Naive thymus-derived CD4-positive, alpha-beta T cell (primary cell): ENCODE measurements at regions of chr17 and their contacts with region 1.

Region 1: DNA sequence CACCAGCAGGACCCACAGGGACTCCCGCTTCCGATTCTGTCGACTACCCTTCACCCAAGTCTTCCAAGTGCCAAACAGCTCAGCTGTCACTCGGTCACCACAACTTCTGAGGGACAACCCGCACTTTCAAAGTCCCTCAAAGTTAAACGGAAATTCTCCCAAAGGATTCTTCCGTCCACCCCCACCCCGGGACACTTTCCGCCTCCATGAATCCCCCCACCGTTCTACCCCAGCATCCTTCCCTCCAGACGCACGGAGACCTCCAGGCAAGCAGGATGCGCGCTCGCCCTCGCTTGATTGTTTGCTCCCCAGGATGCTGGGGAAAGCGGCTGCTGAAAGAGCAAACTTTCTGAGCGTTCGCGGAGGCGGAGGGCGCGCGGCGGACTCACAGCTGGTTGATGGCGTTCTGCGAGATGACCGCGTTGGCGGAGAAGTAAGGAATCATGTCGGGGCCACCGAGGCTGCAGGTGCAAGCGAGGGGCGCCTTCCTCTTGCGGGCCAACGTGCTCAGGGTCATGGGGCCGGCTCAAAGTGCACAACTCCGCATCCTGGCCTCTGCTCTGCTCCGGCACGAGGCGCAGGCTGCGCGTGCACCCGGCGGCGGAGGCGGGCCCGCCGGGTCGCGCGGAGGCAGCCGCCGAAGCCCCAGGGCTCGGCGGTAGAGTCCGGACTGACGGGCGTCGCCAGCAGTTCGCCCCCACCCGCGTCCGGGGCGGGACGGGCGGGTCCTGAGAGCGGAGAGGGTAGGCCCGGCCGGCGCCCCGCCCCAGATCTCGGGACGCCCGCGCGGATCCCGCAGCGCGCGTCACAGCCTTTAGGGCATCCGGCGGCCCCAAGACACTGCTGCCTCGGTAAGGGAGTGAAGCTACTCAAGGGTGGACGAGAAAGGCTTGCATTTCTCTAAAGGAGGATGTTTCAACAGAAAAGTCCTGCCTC is 138.3 kb upstream of the CORO6 start:
- DNase-seq: peak; percentile 86 to 95 (median 93)
- ATAC-seq: peak; percentile 94
- H3K4me3 ChIP-seq: peak overlapping the region; percentile 89
- H3K4me3 Mint-ChIP-seq: peak overlapping the region; percentile 90 to 100 (median 98)
- H3K27ac ChIP-seq: peak overlapping the region; percentile 82
- H3K27ac Mint-ChIP-seq: peak overlapping the region; percentile 90 to 98 (median 96)
- H3K4me1 ChIP-seq: peaks cover 25 to 29% of the 10 kb centered on the region in 2 donors
- H3K4me1 Mint-ChIP-seq: peaks cover 16 to 53% (median 37%) of the 10 kb centered on the region in 7 donors
- H3K27me3 ChIP-seq: no peaks in the 10 kb centered on the region
- H3K27me3 Mint-ChIP-seq: no peaks in the 10 kb centered on the region

Region 2: DNA sequence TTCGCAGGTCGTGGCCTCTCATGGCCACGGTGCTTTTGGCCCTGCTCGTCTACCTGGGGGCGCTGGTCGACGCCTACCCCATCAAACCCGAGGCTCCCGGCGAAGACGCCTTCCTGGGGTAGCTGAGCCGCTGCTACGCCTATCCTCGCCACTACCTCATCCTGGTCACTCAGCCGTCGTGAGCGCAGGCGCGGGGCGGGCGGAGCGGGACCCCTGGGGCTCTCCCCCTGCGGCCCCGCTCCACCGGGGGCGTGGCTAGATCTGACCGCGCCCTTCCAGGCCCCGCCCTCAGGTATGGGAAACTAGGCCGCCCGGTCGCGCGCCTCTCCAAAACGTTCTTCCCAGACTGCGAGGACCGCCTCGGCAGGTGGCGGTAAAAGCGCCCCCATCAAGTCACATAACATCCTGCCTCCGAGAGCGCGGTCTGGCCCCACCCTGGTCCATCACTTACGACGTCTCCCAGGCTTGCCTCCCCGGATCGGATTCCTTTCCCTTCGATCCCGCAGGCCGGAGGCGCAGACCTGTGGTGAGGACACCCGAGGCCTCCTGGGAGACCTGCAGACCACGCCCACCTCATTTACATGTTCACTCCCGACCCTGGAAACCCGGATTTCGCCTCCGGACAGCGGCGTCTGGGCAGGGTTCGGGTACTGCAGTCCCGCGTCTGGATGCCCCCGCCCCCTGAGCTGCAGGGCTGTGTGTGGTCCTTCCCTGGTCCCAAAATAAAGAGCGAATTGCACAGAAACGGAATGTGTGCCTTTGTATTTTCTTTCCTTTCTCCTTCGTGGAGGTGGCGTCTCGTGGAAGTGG is 1533.5 kb before region 1 on chr17:
- CTCF ChIA-PET with region 1: no interaction called
- POLR2A ChIA-PET with region 1: no interaction called
- intact Hi-C with region 1: no loop called
- DNase-seq: peak in 1 of 9 donors; percentile 41
- ATAC-seq: peak; percentile 48
- H3K4me3 ChIP-seq: no peak overlapping the region
- H3K4me3 Mint-ChIP-seq: peak overlapping the region; percentile 51 to 82 (median 74)
- H3K27ac ChIP-seq: no peak overlapping the region
- H3K27ac Mint-ChIP-seq: no peak overlapping the region
- H3K4me1 ChIP-seq: no peaks in the 10 kb centered on the region
- H3K4me1 Mint-ChIP-seq: peaks cover 8 to 15% (median 12%) of the 10 kb centered on the region in 7 donors
- H3K27me3 ChIP-seq: peaks cover 0 to 3% of the 10 kb centered on the region in 2 donors
- H3K27me3 Mint-ChIP-seq: peaks cover 43 to 58% (median 48%) of the 10 kb centered on the region in 5 donors

Region 3: DNA sequence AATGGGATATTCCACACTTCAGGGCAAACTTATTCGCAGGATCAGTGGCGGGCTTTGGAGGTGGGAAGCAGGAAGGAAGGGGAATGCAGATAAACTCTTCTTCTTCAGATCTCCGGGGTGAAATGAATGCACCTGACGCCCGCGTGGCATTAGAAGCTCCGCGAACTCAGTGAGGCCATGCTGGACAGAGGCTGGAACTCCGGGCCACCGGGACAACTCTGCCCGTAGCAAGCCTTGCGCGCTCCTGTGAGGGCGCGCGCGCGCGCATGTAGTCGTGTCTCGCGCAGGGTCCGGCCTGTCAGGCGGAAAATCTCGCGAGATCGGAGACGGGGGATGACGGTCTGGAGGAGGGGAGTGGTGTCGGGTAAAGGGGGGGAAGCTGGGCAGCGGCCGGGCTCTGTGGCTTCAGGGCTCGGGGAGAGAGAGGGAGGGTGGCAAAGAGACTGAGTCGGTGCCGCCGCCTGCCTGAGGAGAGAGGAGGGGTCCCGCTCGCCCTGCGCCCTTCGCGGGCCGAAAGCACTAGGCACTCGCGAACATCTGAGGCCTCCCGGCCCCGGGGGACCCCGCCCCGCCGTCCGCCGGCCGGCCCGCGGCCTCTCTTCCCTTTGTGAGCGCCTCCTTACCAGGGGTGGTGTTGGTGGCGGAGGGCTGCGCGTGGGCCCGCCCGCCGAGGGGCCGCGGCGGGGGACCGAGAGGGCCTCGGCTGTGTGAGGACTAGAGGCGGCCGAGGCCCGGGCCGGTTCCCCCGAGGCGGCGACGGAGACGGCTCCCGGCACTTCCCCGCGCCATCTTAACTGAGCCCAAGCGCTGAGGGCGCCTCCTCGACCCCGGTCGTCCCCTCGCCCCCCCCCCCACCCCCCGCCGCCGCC is 370.8 kb before region 1 on chr17 and contains the start of gene TAOK1:
- CTCF ChIA-PET with region 1: no interaction called
- POLR2A ChIA-PET with region 1: no interaction called
- intact Hi-C with region 1: loop called in 1 of 2 experiments (anchors 5 kb)
- DNase-seq: peak; percentile 93 to 98 (median 96)
- ATAC-seq: peak; percentile 97
- H3K4me3 ChIP-seq: peak within 1 kb of the TSS; percentile 94
- H3K4me3 Mint-ChIP-seq: peak within 1 kb of the TSS; percentile 95 to 99 (median 98)
- H3K27ac ChIP-seq: peak within 1 kb of the TSS; percentile 98
- H3K27ac Mint-ChIP-seq: peak within 1 kb of the TSS; percentile 92 to 98 (median 97)
- H3K4me1 ChIP-seq: peaks cover 14 to 25% of the 10 kb centered on the region in 2 donors
- H3K4me1 Mint-ChIP-seq: peaks cover 36 to 49% (median 44%) of the 10 kb centered on the region in 7 donors
- H3K27me3 ChIP-seq: no peaks in the 10 kb centered on the region
- H3K27me3 Mint-ChIP-seq: peaks cover 0 to 2% (median 0%) of the 10 kb centered on the region in 5 donors
- total RNA-seq, gene TAOK1: 62.4 to 70.1 (median 66.5) TPM

Region 4: DNA sequence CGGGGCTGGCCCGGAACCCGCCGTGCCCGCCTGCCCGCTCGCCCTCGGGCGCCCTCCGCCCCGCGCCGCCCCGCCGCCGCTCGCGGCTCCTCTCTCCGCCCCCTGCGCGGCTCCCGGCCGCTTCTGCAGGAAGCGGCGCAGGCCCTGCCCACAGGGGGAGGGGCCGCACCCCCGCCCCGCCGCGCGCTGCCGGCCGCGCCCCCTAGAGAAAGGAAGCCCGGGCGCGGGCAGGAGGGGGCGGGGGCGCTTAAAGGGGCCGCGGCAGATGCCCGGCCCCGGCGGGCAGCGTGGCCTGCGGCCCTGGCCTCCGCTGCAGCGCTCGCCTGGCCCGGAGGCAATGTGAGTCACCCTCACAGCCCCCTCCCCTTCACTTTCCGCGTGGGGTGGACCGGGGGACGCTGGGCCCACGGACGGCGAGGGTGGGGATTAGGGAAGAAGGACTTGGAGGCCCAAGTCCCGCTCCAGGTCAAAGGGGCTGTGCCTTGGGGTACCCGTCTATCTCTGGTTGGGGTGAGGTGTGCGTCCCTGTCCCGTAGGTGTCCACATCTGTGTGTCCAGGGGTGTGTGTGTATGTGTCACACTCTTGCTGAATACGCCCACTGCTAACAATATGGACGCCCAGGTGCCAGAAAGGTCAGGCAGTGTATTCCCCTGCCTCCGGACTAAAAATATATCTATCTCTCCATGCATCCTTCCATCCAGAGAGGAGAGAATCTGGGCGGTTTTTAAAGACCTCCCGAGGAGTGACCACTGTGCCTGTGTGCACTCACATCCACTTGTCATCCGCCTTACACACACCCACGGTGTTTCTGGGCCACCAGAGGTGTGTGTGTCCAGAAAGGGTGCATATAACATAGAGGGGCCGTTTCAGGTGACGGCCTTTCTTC is 171.3 kb before region 1 on chr17 and contains the start of gene GIT1:
- CTCF ChIA-PET with region 1: no interaction called
- POLR2A ChIA-PET with region 1: interaction called, 3 read pairs
- intact Hi-C with region 1: loop called in 1 of 2 experiments (anchors 1 kb)
- DNase-seq: peak; percentile 77 to 88 (median 84)
- ATAC-seq: peak; percentile 93
- H3K4me3 ChIP-seq: peak within 1 kb of the TSS; percentile 72
- H3K4me3 Mint-ChIP-seq: peak within 1 kb of the TSS; percentile 88 to 96 (median 94)
- H3K27ac ChIP-seq: peak within 1 kb of the TSS; percentile 75
- H3K27ac Mint-ChIP-seq: peak within 1 kb of the TSS; percentile 78 to 94 (median 89)
- H3K4me1 ChIP-seq: peaks cover 58 to 65% of the 10 kb centered on the region in 2 donors
- H3K4me1 Mint-ChIP-seq: peaks cover 35 to 73% (median 66%) of the 10 kb centered on the region in 7 donors
- H3K27me3 ChIP-seq: no peaks in the 10 kb centered on the region
- H3K27me3 Mint-ChIP-seq: no peaks in the 10 kb centered on the region
- total RNA-seq, gene GIT1: 42.5 to 76.3 (median 62.4) TPM

Region 5: GRCh38 chr17:29640413-29640812 is 120.6 kb before region 1 on chr17:
- CTCF ChIA-PET with region 1: interaction called, 3 read pairs
- POLR2A ChIA-PET with region 1: interaction called, 3 read pairs
- intact Hi-C with region 1: loop called (anchors 1 to 5 kb)
- DNase-seq: no peak
- ATAC-seq: no peak
- H3K4me3 ChIP-seq: no peak overlapping the region
- H3K4me3 Mint-ChIP-seq: no peak overlapping the region
- H3K27ac ChIP-seq: no peak overlapping the region
- H3K27ac Mint-ChIP-seq: peak overlapping the region in 8 of 9 donors; percentile 40 to 88 (median 61)
- H3K4me1 ChIP-seq: no peaks in the 10 kb centered on the region
- H3K4me1 Mint-ChIP-seq: peaks cover 0 to 35% (median 19%) of the 10 kb centered on the region in 7 donors
- H3K27me3 ChIP-seq: no peaks in the 10 kb centered on the region
- H3K27me3 Mint-ChIP-seq: no peaks in the 10 kb centered on the region

Region 6: DNA sequence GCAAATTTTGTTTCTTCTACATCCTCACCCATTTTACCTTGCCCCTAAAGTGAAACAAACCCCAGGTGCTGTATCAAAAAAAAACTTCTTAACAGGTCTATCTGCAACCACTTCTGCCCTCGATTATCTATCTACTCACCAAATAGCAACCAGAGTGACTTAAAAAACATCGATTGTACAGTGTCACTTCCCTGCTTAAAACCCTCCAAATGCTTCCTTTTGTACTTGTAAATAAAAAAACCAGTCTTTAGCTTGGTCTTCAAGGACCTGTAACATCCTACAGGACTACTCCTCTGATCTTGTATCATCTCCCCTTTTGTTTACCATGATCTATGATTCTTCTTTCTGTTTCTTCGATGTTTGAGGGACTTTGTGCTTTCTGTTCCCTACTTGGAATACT is 55.6 kb before region 1 on chr17:
- CTCF ChIA-PET with region 1: no interaction called
- POLR2A ChIA-PET with region 1: interaction called, 57 read pairs
- intact Hi-C with region 1: loop called (anchors 1 kb)
- DNase-seq: peak in 6 of 9 donors; percentile 16 to 41 (median 24)
- ATAC-seq: peak; percentile 6
- H3K4me3 ChIP-seq: peak overlapping the region; percentile 22
- H3K4me3 Mint-ChIP-seq: peak overlapping the region; percentile 4 to 81 (median 72)
- H3K27ac ChIP-seq: peak overlapping the region; percentile 73
- H3K27ac Mint-ChIP-seq: peak overlapping the region; percentile 85 to 99 (median 96)
- H3K4me1 ChIP-seq: peaks cover 35 to 41% of the 10 kb centered on the region in 2 donors
- H3K4me1 Mint-ChIP-seq: peaks cover 18 to 69% (median 51%) of the 10 kb centered on the region in 7 donors
- H3K27me3 ChIP-seq: no peaks in the 10 kb centered on the region
- H3K27me3 Mint-ChIP-seq: no peaks in the 10 kb centered on the region

Region 7: DNA sequence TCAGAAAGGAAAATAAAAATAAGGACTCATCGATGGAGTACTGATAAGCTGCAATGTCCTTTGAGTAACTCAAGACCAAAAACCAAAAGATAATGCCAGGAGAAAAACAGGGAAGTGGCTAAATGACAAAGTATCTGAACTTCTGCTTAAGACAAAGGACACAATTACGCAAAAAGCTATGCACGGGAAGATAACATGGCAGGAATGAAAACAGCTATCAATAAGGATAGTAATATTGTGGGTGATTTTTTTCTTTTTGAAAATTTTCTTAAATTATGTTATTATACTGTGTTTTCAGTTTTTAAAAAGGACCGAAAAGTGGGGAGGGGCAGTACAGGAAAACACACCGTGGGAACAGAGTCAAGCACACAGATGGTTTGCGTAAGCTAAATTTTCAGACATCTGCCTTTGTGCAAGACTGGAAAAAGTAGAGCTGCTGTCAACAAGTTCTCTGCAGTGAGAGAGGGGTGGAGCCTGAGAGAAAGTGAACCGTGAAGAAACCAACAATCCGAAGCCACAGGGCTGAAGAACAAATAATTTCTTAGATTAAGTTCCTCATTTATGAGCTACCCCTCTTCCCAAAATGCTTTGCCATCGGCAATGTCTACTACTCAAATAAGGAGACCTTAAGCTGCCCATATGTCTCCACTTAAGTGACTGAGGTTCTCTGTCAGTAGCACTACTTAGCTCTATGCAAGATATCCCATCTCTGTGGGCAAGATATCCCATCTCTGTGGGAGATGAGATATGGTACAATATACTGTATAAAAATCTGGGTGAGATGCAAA is 38.4 kb before region 1 on chr17:
- CTCF ChIA-PET with region 1: interaction called, 7 read pairs
- POLR2A ChIA-PET with region 1: interaction called, 52 read pairs
- intact Hi-C with region 1: loop called (anchors 1 kb)
- DNase-seq: peak in 7 of 9 donors; percentile 69 to 85 (median 80)
- ATAC-seq: peak; percentile 84
- H3K4me3 ChIP-seq: peak overlapping the region; percentile 32
- H3K4me3 Mint-ChIP-seq: peak overlapping the region; percentile 55 to 92 (median 72)
- H3K27ac ChIP-seq: peak overlapping the region; percentile 72
- H3K27ac Mint-ChIP-seq: peak overlapping the region; percentile 21 to 98 (median 92)
- H3K4me1 ChIP-seq: peaks cover 56 to 74% of the 10 kb centered on the region in 2 donors
- H3K4me1 Mint-ChIP-seq: peaks cover 55 to 94% (median 85%) of the 10 kb centered on the region in 7 donors
- H3K27me3 ChIP-seq: no peaks in the 10 kb centered on the region
- H3K27me3 Mint-ChIP-seq: no peaks in the 10 kb centered on the region

Region 8: GRCh38 chr17:29747660-29748059 is 13.4 kb before region 1 on chr17:
- CTCF ChIA-PET with region 1: interaction called, 4 read pairs
- POLR2A ChIA-PET with region 1: interaction called, 14 read pairs
- intact Hi-C with region 1: loop called in 1 of 2 experiments (anchors 1 kb)
- DNase-seq: no peak
- ATAC-seq: no peak
- H3K4me3 ChIP-seq: no peak overlapping the region
- H3K4me3 Mint-ChIP-seq: peak overlapping the region in 6 of 10 donors; percentile 3 to 64 (median 24)
- H3K27ac ChIP-seq: no peak overlapping the region
- H3K27ac Mint-ChIP-seq: peak overlapping the region in 7 of 9 donors; percentile 3 to 84 (median 39)
- H3K4me1 ChIP-seq: peaks cover 3 to 18% of the 10 kb centered on the region in 2 donors
- H3K4me1 Mint-ChIP-seq: peaks cover 41 to 95% (median 79%) of the 10 kb centered on the region in 7 donors
- H3K27me3 ChIP-seq: no peaks in the 10 kb centered on the region
- H3K27me3 Mint-ChIP-seq: no peaks in the 10 kb centered on the region